OCI-LY7 (cell line): ENCODE measurements at regions of chr14 and their contacts with region 1.

Region 1: DNA sequence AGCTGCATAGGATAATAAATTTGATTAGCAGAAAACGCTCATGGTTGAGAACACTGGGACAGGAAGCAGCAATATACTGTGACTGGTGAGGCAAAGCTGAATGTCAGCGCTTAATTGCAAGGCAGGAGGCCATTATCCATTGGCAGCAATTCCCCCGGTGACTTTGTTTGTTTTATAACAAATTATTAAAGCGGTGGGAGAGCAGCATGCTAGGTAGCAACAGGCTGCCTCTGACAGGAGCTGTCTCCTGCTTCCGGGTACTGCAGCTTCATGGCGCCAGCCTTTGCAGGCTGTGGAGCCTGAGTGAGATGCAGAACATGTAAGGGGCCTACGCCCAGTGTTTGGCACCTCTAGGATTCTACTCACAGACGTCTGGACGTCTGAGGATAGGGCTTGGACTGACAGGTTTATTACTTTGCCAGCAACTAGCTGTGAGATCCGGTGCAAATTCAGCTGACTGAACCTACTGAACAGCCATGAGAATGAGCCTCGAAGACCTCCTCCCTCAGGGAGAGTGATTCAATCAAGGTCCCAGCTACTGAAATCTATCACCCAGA is 82.1 kb upstream of the SSTR1 start:
- DNase-seq: peak; percentile 92
- H3K4me3 ChIP-seq: peak overlapping the region; percentile 26
- H3K27ac ChIP-seq: peak overlapping the region; percentile 97
- H3K4me1 ChIP-seq: peaks cover 97% of the 10 kb centered on the region
- CTCF ChIP-seq: no peak

Region 2: GRCh38 chr14:37936931-37937522 is 188.5 kb before region 1 on chr14:
- CTCF ChIA-PET with region 1: no interaction called
- POLR2A ChIA-PET with region 1: no interaction called
- intact Hi-C with region 1: no loop called
- DNase-seq: no peak
- H3K4me3 ChIP-seq: no peak overlapping the region
- H3K27ac ChIP-seq: no peak overlapping the region
- H3K4me1 ChIP-seq: no peaks in the 10 kb centered on the region
- CTCF ChIP-seq: no peak

Region 3: GRCh38 chr14:38107216-38107631 is 18.3 kb before region 1 on chr14:
- CTCF ChIA-PET with region 1: interaction called, 3 read pairs
- POLR2A ChIA-PET with region 1: interaction called, 157 read pairs
- intact Hi-C with region 1: no loop called
- DNase-seq: no peak
- H3K4me3 ChIP-seq: no peak overlapping the region
- H3K27ac ChIP-seq: no peak overlapping the region
- H3K4me1 ChIP-seq: no peaks in the 10 kb centered on the region
- CTCF ChIP-seq: no peak

Region 4: DNA sequence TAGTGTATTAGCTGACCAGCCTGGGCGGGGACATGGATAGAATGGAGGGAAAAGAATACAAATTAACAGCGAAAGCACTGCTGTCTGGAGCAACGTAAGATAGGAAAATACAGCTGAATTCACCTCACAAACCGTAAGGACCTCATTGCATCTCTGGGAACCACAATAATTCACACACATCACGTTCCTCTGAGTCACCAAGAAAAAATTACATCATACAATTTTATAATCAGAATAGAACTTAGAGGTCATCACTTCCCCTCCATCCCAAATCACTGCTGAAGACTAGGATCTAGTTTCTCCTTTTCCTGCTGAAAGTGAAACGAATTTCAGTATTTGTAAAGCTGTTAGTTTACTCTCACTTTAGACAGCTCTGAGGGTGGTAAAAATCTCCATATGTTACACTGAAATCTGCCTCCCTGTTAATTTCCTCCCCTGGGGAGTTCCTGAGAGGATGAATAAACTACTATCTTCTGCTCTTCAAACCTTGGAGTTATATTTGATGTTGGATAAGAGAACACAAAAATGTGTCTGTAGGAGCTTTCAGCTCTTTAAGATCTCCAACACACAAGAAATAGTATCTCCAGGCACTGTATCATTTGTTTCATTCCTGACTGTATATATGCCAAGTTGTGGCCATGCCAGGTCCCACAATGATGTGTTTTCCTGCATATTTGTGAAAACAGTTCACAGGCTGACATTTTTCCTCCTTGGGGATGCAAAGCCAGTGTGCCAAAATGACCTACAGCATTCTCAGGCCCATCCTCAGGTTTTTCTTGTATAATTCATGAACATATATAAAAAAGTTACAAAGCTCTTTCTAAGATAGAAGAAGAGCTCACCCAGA is 18.3 kb after region 1 on chr14:
- CTCF ChIA-PET with region 1: interaction called, 4 read pairs
- POLR2A ChIA-PET with region 1: interaction called, 91 read pairs
- intact Hi-C with region 1: no loop called
- DNase-seq: no peak
- H3K4me3 ChIP-seq: no peak overlapping the region
- H3K27ac ChIP-seq: no peak overlapping the region
- H3K4me1 ChIP-seq: peaks cover 18% of the 10 kb centered on the region
- CTCF ChIP-seq: no peak

Region 5: DNA sequence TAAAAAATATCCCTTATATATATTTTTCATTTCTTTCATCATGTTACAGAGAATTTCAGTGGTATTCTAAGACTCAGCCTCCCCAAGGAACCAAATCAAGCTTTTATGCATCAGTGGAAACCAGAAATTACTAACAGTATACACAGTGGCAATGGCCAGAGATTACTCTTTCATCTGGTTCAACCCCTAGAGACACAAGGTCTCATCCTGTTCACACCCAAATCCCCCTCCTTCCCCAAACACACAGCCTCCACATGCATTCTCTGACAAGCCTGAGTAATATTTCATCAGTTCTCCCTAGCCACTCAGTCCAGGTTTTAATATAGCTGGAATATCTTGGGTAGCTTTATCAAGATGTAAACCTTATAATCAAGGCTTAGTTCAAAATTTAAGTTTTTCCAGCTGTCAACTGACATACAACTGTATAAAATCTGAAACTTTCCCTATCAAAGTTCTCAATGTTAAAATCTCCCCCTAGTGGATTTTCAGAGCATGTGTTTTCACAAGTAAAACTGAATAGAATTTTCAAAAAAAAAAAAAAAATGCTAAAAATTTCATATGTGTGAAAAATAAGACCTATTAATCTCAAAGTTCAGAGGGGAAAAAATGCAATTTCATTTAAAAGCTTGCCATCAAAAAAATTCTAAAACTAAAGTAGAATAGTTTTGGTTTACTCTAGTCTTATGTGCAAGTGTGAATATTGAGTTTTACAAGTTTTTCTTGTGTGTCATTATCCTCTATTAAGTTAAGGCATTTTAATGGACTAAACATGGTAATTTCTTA is 71.6 kb after region 1 on chr14:
- CTCF ChIA-PET with region 1: interaction called, 4 read pairs
- POLR2A ChIA-PET with region 1: interaction called, 5 read pairs
- intact Hi-C with region 1: loop called (anchors 2 kb)
- DNase-seq: peak; percentile 74
- H3K4me3 ChIP-seq: no peak overlapping the region
- H3K27ac ChIP-seq: peak overlapping the region; percentile 42
- H3K4me1 ChIP-seq: peaks cover 34% of the 10 kb centered on the region
- CTCF ChIP-seq: peak; percentile 95

Region 6: GRCh38 chr14:39114073-39114838 is 988.7 kb after region 1 on chr14 and contains the start of gene GEMIN2:
- CTCF ChIA-PET with region 1: no interaction called
- POLR2A ChIA-PET with region 1: no interaction called
- intact Hi-C with region 1: loop called (anchors 10 kb)
- DNase-seq: peak; percentile 98
- H3K4me3 ChIP-seq: peak within 1 kb of the TSS; percentile 89
- H3K27ac ChIP-seq: peak within 1 kb of the TSS; percentile 86
- H3K4me1 ChIP-seq: peaks cover 31% of the 10 kb centered on the region
- CTCF ChIP-seq: no peak
- total RNA-seq, gene GEMIN2: 53.4 and 72.0 TPM in 2 replicates